ENCODE measurements at regions of chr3 and their contacts with region 1.

Region 1: GRCh38 chr3:138426226-138426625 is 8.2 kb upstream of the ESYT3 start:
- DNase-seq: no peak
- ATAC-seq: peak in 2 of 4 donors; percentile 39 to 46
- H3K4me3 ChIP-seq: no peak overlapping the region
- H3K27ac ChIP-seq: no peak overlapping the region
- H3K4me1 ChIP-seq: no peaks in the 10 kb centered on the region
- H3K27me3 ChIP-seq: no peaks in the 10 kb centered on the region
- CTCF ChIP-seq: peak; percentile 28 to 34 (median 30)
- POLR2A ChIP-seq: no peak

Region 2: DNA sequence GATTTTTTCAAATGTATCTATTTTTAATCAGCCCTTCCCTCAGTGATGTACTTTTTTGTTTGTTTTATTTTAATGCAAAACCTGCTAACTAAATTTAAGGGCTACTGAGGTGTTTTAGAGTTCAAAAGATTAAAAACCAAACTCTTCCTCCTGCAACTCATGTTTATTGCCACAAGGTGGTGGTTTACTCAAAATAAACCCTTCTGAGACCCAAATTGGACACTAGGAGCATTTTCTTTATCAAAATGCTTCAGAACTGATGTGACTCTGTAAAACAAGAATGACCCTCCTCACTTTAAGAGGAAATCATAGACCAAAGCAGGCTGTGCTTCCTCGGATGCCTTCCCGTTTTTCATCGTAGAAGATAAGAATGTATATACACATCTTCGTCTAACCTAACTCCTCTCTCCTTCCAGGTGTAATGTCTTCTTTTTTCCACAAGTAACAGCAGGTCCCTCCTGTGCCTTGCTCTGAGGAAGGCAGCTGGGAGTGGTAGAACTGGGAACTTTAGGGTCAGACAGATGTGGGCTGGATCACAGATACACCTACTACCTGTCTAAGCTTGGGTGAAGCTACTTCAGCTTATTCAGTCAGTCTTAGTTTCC is 93.7 kb before region 1 on chr3:
- intact Hi-C with region 1: loop called in 1 of 2 experiments (anchors 10 kb)
- DNase-seq: no peak
- ATAC-seq: peak; percentile 46 to 51 (median 47)
- H3K4me3 ChIP-seq: no peak overlapping the region
- H3K27ac ChIP-seq: no peak overlapping the region
- H3K4me1 ChIP-seq: peaks cover 0 to 3% (median 0%) of the 10 kb centered on the region in 4 donors
- H3K27me3 ChIP-seq: no peaks in the 10 kb centered on the region
- CTCF ChIP-seq: peak; percentile 61 to 75 (median 68)
- POLR2A ChIP-seq: no peak

Region 3: DNA sequence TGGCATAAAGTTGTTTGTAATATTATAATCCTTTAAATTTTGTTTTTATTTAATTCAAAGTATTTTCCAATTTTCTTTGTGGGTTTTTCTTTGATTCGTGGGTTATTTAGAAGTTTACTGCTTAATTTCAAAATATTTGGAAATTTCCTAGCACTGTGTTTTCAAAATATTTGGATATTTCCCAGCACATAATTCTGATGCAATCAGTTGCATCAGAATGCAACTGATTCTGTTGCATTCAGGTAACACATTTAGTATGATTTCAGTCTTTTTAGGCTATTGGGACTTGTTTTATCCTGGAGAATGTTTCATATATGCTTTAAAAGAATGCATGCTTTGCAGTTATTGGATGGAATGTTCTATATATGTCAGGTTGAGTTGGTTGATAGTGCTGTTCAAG is 636.7 kb after region 1 on chr3:
- intact Hi-C with region 1: no loop called
- DNase-seq: no peak
- ATAC-seq: no peak
- H3K4me3 ChIP-seq: no peak overlapping the region
- H3K27ac ChIP-seq: no peak overlapping the region
- H3K4me1 ChIP-seq: no peaks in the 10 kb centered on the region
- H3K27me3 ChIP-seq: no peaks in the 10 kb centered on the region
- CTCF ChIP-seq: no peak
- POLR2A ChIP-seq: no peak

Measured in right lobe of liver (tissue), 6 donors.